Activated B cell treated with CpG ODN at 0.5 μM for 24 hours (primary cell): ENCODE measurements at regions of chr1 and their contacts with region 1.

Region 1: DNA sequence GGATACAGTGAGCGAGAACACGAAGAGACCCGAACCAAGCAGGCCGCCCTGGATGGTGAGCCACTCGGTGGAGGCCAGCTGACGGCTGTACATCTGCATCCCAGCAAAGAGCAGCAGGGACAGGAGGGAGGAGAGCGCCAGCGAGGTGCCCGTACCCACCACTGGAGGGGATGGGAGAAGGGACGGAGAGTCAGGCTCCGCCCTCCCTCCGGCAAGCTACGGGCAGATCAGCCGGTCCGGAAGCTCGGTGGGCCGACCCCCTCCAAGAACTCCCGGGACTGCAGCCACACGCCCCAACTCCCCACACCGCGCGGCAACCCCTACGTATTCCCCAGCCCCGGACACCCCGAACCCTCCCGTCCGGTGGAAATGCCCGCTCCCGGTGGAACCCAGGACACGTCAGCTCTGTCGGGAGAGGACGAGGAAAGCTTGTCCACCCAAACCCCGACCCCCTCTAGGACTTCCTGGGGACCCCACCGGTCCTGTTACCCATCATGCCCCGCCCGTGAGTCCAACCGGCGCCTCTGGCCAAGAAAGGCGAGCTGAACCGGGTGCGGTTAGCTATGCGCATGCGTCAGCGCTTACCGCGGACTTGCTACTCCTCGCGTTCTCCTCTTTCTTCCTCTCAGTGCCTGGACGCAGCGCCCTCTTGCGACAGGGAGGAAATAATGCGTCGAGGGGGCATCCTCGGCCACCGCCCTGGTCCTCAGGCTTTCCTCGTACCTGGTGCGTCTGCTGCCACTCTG is at the start of gene KRTCAP2:
- DNase-seq: peak; percentile 87
- ATAC-seq: peak; percentile 85
- H3K4me3 Mint-ChIP-seq: peak within 1 kb of the TSS; percentile 99
- H3K27ac Mint-ChIP-seq: peak within 1 kb of the TSS; percentile 98
- H3K4me1 Mint-ChIP-seq: peaks cover 33% of the 10 kb centered on the region
- H3K27me3 Mint-ChIP-seq: no peaks in the 10 kb centered on the region
- CTCF ChIP-seq: peak; percentile 97
- total RNA-seq, gene KRTCAP2: 128 and 132 TPM in 2 replicates

Region 2: DNA sequence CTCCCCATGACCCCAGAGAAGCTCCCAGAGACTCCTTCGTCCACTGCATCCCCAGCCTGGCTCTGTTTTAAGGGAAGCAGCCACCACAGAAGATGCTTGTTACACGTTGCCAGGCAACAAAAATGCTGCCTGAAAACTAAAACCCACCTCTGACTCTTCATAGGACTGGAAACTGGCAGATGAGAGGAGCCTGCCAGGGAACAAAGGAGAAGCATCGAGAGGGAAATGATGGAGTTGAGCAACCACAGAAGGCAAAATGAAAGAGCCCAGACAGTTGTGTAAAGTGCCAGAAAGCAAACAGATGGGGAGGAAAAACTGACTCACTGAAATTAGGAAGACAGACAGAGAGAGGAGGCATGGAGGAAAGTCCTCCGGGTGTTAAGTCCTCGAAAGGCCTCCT is 421.2 kb before region 1 on chr1:
- CTCF ChIA-PET with region 1: no interaction called
- POLR2A ChIA-PET with region 1: no interaction called
- intact Hi-C with region 1: no loop called
- DNase-seq: no peak
- ATAC-seq: no peak
- H3K4me3 Mint-ChIP-seq: no peak overlapping the region
- H3K27ac Mint-ChIP-seq: no peak overlapping the region
- H3K4me1 Mint-ChIP-seq: peaks cover 11% of the 10 kb centered on the region
- H3K27me3 Mint-ChIP-seq: peaks cover 43% of the 10 kb centered on the region
- CTCF ChIP-seq: no peak

Region 3: DNA sequence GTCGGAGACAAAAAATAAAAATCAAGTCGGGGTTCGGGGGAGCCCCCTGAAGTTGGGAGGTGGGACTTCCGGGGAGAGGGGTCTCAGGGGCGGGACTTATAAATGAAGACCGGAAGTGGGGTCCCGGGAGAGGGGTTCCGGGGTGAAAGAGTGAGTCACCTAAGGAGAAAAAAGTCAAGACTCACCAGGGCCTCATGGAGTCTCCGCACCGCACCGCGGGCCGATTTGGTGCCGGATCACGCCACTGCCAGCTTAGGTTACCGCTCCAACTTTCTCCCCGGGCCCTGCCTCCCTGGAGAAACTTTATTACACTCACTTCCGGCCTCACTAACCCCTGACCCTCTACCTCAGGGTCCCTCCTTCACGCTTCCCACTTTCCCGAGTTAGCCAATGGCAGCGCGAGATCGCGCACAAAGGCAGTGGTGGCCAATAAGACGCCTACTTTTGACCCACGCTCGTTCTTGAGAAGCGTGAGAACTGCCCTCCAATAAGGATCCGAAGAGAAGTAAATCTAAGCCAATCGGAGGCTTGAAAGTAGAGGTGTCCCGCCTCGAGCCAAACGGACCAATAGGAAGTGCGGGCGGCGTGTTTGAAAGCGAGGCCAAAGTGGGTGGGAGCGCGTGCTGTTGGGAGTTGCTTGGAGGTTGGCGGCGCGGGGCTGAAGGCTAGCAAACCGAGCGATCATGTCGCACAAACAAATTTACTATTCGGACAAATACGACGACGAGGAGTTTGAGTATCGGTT is 198.7 kb before region 1 on chr1 and contains the start of gene CKS1B:
- CTCF ChIA-PET with region 1: no interaction called
- POLR2A ChIA-PET with region 1: interaction called, 4 read pairs
- intact Hi-C with region 1: loop called (anchors 10 kb)
- DNase-seq: peak; percentile 87
- ATAC-seq: peak; percentile 83
- H3K4me3 Mint-ChIP-seq: no peak within 1 kb of the TSS
- H3K27ac Mint-ChIP-seq: no peak within 1 kb of the TSS
- H3K4me1 Mint-ChIP-seq: peaks cover 36% of the 10 kb centered on the region
- H3K27me3 Mint-ChIP-seq: no peaks in the 10 kb centered on the region
- CTCF ChIP-seq: no peak
- total RNA-seq, gene CKS1B: 25.3 and 26.6 TPM in 2 replicates

Region 4: DNA sequence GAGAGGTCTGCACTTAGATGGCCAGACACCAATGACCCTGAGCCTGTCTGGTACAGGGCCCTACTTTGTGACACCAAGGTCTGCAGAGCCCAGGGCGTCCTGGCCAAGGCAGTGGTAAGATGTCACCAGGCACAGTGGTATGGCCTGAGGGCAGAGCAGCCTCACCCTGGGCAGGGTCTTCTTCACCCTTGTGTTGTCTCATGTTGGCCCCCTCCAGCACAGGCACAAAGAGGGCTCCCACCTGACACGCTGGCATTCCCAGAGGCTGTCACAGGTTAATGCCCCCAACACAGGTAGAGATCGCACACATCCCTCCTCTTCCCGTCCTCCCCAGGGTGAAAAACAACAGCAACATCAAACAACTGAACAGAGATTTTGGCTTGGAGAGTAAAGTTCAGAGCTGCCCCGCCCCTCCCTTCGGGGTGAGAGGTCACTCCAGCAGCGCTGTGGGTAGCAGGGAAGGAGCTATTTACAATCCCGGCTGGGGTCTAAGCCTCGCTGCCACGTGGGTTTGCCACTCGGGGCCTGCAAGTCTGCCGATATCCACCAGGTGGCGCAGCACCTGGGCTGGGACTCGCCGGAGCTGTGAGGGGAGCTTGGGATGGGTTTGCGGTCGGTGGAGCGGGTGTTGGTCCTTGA is 81.7 kb before region 1 on chr1:
- CTCF ChIA-PET with region 1: interaction called, 145 read pairs
- POLR2A ChIA-PET with region 1: interaction called, 38 read pairs
- intact Hi-C with region 1: loop called (anchors 1 kb)
- DNase-seq: peak; percentile 76
- ATAC-seq: peak; percentile 89
- H3K4me3 Mint-ChIP-seq: no peak overlapping the region
- H3K27ac Mint-ChIP-seq: no peak overlapping the region
- H3K4me1 Mint-ChIP-seq: peaks cover 12% of the 10 kb centered on the region
- H3K27me3 Mint-ChIP-seq: peaks cover 6% of the 10 kb centered on the region
- CTCF ChIP-seq: peak; percentile 48

Region 5: DNA sequence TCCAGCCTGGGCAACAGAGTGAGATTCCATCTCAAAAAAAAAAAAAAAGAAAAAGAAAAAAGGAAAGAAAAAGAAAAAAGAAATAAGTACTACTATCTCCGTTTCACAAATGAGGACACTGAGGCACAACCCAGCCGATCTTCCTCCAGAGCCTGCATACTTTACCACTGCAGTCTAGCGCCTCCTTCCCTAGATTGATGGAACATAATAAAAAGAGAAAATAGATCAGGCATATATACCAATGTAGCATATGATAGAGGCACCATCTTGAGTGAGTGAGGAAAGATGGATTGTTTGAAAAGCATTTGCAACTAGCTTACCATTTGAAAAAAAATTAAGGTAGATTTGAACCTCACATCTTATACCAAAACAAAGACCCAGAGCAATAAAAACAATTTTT is 27.4 kb before region 1 on chr1:
- CTCF ChIA-PET with region 1: interaction called, 18 read pairs
- POLR2A ChIA-PET with region 1: interaction called, 20 read pairs
- intact Hi-C with region 1: loop called (anchors 1 kb)
- DNase-seq: no peak
- ATAC-seq: no peak
- H3K4me3 Mint-ChIP-seq: no peak overlapping the region
- H3K27ac Mint-ChIP-seq: no peak overlapping the region
- H3K4me1 Mint-ChIP-seq: peaks cover 25% of the 10 kb centered on the region
- H3K27me3 Mint-ChIP-seq: no peaks in the 10 kb centered on the region
- CTCF ChIP-seq: no peak

Region 6: DNA sequence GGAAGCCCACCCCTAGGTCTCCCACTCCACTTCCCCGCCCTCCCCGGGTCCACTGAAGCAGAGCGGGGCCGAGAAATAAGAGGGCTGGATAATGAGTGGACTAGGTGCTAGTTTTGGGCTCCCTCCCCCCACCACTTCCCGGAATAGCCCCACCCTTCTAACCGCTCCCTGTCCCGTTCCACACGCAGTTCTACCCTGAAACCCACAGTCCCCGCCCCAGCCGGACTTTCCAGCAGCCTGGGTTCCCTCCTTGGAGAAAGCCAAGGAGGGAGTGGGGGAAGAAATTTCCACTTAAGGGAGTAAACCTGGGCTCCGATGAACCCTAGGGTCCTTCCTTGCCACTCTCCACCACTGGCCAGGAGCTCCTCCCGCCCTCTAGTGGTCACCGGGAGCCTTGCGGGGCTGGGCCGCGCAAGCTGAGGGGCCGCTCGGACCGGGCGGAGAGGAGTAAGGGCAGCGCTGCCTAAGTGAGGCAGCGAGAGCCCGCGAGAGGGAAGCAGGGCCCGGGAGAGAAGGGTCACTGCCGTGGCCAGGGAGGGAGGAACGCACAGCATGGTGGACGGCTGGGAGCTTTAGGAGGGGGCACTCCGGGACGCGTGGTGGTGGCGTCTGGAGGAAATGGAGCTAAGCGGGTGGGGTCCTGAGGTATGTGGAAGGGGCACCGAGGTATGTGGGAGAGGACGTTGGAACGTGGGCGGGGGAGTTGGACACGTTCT is 20.5 kb after region 1 on chr1:
- CTCF ChIA-PET with region 1: interaction called, 49 read pairs
- POLR2A ChIA-PET with region 1: interaction called, 26 read pairs
- intact Hi-C with region 1: loop called (anchors 2 kb)
- DNase-seq: peak; percentile 81
- ATAC-seq: peak; percentile 73
- H3K4me3 Mint-ChIP-seq: peak overlapping the region; percentile 88
- H3K27ac Mint-ChIP-seq: peak overlapping the region; percentile 84
- H3K4me1 Mint-ChIP-seq: peaks cover 28% of the 10 kb centered on the region
- H3K27me3 Mint-ChIP-seq: no peaks in the 10 kb centered on the region
- CTCF ChIP-seq: peak; percentile 63

Region 7: DNA sequence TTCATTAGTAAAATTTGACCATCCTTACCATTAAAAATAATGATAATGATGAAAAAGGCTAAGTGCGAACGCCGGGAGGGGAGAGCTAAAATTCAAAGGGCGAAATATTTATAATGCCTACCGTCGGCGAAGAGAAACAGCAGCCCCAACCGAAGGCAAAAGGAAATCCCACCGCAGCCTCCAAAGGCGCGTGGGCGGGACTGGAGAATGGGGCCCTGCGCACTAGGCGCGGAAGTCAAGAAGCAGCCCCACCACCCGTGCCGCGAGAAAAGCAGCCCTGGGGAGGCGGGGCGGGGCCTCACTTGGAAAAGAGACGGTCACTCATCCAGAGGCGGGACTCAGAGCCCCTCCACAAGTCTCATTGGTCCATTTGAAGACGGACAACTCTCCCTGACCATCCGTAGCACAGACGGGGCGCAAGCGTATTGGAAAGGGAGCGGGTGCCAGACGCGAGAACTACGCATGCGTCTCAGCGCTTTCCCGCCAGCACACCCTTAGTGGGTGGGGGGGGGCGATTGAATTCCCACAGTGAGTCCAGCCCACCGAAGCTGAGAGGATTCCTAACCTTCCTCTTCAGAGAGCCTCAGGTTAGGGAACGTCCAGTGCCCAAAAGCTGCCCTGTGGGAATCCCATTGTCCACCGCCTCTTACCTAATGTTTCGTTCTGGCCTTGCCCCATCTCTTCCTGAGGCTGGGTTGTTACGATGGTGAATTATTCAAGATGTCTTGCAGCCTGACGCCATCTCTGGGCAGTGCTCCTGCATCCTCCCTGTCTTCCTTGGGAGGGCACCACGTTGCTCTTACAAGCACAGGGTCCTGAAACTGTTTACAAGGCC is 54.6 kb after region 1 on chr1:
- CTCF ChIA-PET with region 1: interaction called, 14 read pairs
- POLR2A ChIA-PET with region 1: interaction called, 5 read pairs
- intact Hi-C with region 1: loop called (anchors 1 kb)
- DNase-seq: peak; percentile 90
- ATAC-seq: peak; percentile 96
- H3K4me3 Mint-ChIP-seq: peak overlapping the region; percentile 88
- H3K27ac Mint-ChIP-seq: peak overlapping the region; percentile 87
- H3K4me1 Mint-ChIP-seq: peaks cover 43% of the 10 kb centered on the region
- H3K27me3 Mint-ChIP-seq: no peaks in the 10 kb centered on the region
- CTCF ChIP-seq: no peak

Region 8: GRCh38 chr1:155466996-155467395 is 294.1 kb after region 1 on chr1:
- CTCF ChIA-PET with region 1: no interaction called
- POLR2A ChIA-PET with region 1: no interaction called
- intact Hi-C with region 1: no loop called
- DNase-seq: no peak
- ATAC-seq: no peak
- H3K4me3 Mint-ChIP-seq: no peak overlapping the region
- H3K27ac Mint-ChIP-seq: peak overlapping the region; percentile 86
- H3K4me1 Mint-ChIP-seq: peaks cover 58% of the 10 kb centered on the region
- H3K27me3 Mint-ChIP-seq: no peaks in the 10 kb centered on the region
- CTCF ChIP-seq: no peak